GM12878 (cell line): ENCODE measurements at regions of chr10 and their contacts with region 1.

Region 1: GRCh38 chr10:110746254-110746826 is 102.2 kb downstream of the RBM20 start:
- DNase-seq: no peak
- ATAC-seq: peak; percentile 73
- H3K4me3 ChIP-seq: no peak overlapping the region
- H3K27ac ChIP-seq: peak overlapping the region; percentile 94; the same call in 1 of the 2 replicates
- H3K4me1 ChIP-seq: peaks cover 31% of the 10 kb centered on the region
- H3K27me3 ChIP-seq: no peaks in the 10 kb centered on the region
- CTCF ChIP-seq: peak; percentile 66 to 78 (median 76)
- EP300 ChIP-seq: no peak
- POLR2A ChIP-seq: no peak
- RAD21 ChIP-seq: peak; percentile 96

Region 2: DNA sequence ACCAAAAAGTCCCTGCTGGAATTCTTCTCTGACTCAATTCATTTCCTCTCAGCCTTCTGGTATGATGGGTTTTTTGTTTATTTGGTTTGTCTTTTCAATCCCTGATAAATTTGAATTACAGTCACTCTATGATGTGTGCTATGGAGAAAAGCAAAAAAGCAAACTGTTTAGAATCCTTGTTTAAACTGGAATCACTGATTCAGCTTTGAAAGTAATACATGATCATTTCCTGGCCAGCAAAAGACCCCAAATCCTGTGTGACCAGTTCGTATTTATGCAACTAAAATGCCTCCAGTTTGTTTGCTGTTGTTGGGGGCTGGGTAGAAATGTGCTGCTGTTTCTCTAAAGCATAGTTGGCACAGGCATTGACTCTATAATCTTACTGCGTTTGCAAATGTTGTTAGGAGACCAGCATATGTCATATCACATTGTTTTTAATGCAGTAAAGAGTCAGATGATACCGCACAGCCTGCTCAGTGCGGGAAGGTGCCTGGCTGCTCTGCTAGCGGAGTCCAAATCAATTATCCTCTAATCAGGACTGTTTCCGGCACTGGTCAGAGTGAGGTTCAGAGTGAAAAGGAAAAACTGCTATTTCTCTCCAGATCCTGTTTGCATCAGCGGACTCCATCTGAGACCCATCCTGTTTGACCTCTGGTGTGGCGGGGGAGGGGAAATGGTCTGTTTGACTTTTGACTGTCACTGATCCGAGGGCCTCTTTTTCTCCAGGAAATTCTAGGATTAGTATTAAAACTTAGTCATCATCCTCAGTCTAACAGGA is 779.2 kb before region 1 on chr10:
- CTCF ChIA-PET with region 1: no interaction called
- POLR2A ChIA-PET with region 1: no interaction called
- RAD21 ChIA-PET with region 1: no interaction called
- SMC1A ChIA-PET with region 1: no interaction called
- in situ Hi-C with region 1: no loop called
- intact Hi-C with region 1: no loop called
- DNase-seq: no peak
- ATAC-seq: no peak
- H3K4me3 ChIP-seq: no peak overlapping the region
- H3K27ac ChIP-seq: no peak overlapping the region
- H3K4me1 ChIP-seq: no peaks in the 10 kb centered on the region
- H3K27me3 ChIP-seq: no peaks in the 10 kb centered on the region; a peak in 2 of 4 replicates
- CTCF ChIP-seq: no peak
- EP300 ChIP-seq: no peak
- POLR2A ChIP-seq: no peak
- RAD21 ChIP-seq: no peak

Region 3: DNA sequence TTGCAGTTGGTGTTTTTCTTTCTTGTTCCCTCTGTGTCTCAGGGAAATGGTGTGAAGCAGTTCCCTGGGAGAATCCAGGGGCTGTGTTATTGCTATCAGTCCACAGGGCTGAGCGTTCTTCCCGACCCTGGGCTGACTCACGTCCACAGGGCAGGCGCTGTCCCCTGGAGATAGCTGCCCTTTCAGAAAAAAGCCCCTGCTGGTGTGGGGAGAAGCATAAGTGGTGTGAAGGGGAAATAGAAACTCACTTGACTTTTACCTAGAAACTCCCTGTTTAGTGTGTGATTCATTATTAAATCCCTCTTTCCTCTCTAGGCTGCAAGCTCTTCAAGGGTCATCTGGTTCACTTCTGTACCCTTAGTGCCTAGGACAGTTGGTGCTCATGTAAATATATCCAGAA is 378.3 kb before region 1 on chr10:
- CTCF ChIA-PET with region 1: no interaction called
- POLR2A ChIA-PET with region 1: no interaction called
- RAD21 ChIA-PET with region 1: no interaction called
- SMC1A ChIA-PET with region 1: no interaction called
- in situ Hi-C with region 1: no loop called
- intact Hi-C with region 1: no loop called
- DNase-seq: no peak
- ATAC-seq: peak; percentile 86
- H3K4me3 ChIP-seq: no peak overlapping the region
- H3K27ac ChIP-seq: no peak overlapping the region; the same call in 1 of the 2 replicates
- H3K4me1 ChIP-seq: peaks cover 29% of the 10 kb centered on the region
- H3K27me3 ChIP-seq: no peaks in the 10 kb centered on the region
- CTCF ChIP-seq: no peak
- EP300 ChIP-seq: peak in 1 of 2 experiments; percentile 43; a peak in 1 of 4 replicates
- POLR2A ChIP-seq: no peak
- RAD21 ChIP-seq: no peak

Region 4: DNA sequence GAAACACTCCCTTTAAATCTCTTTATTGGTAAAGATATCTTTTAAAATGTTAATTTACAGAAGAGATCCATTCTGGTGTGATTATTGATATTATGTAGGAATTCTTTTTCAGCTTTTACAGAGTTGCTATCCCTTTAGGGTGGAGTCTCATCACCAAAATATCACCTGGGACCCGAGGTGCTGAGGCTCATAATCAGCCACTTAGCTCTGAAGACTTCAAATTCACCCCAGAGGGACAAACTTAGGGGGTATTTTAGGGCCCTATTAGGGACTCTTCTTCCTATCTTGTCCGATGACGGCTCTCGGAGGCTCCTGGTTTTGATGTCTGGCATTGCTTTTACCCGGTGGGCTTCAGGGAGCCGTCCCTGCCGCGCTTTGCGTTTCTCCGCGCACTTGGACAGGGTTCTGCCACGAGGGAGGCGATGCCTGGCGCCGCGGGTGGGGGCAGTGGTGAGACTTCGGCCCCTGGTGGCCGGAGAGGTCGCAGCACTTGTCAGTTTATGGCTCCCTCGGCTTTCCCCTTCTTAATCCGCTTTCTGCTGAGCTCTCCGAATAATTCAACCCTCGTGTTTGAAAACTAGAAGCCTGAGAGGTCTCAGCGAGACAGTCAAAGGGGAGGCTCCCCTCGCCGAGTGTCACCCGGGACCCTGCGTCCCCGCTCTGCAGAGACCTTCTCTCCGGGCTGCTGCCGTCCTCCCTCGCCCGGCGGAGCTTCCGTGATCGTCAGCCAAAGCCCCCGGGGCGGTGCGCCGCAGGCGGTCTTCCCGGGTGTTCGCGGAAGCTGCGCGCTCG is 74.4 kb before region 1 on chr10:
- CTCF ChIA-PET with region 1: interaction called, 11 read pairs
- POLR2A ChIA-PET with region 1: no interaction called
- RAD21 ChIA-PET with region 1: no interaction called
- SMC1A ChIA-PET with region 1: interaction called, 11 read pairs
- in situ Hi-C with region 1: no loop called
- intact Hi-C with region 1: no loop called
- DNase-seq: peak; percentile 27
- ATAC-seq: peak; percentile 99
- H3K4me3 ChIP-seq: peak overlapping the region; percentile 74
- H3K27ac ChIP-seq: peak overlapping the region; percentile 62
- H3K4me1 ChIP-seq: no peaks in the 10 kb centered on the region
- H3K27me3 ChIP-seq: no peaks in the 10 kb centered on the region
- CTCF ChIP-seq: peak; percentile 99 to 100 (median 99)
- EP300 ChIP-seq: no peak
- POLR2A ChIP-seq: peak; percentile 80
- RAD21 ChIP-seq: peak; percentile 64

Region 5: GRCh38 chr10:110717781-110718589 is 28.4 kb before region 1 on chr10:
- CTCF ChIA-PET with region 1: no interaction called
- POLR2A ChIA-PET with region 1: no interaction called
- RAD21 ChIA-PET with region 1: no interaction called
- SMC1A ChIA-PET with region 1: no interaction called
- in situ Hi-C with region 1: no loop called
- intact Hi-C with region 1: no loop called
- DNase-seq: no peak
- ATAC-seq: peak; percentile 74
- H3K4me3 ChIP-seq: no peak overlapping the region
- H3K27ac ChIP-seq: no peak overlapping the region
- H3K4me1 ChIP-seq: 0 out of 2 replicates have a peak, but pooled peaks cover 4% of the 10 kb centered on the region
- H3K27me3 ChIP-seq: no peaks in the 10 kb centered on the region
- CTCF ChIP-seq: no peak
- EP300 ChIP-seq: no peak
- POLR2A ChIP-seq: no peak
- RAD21 ChIP-seq: no peak

Region 6: DNA sequence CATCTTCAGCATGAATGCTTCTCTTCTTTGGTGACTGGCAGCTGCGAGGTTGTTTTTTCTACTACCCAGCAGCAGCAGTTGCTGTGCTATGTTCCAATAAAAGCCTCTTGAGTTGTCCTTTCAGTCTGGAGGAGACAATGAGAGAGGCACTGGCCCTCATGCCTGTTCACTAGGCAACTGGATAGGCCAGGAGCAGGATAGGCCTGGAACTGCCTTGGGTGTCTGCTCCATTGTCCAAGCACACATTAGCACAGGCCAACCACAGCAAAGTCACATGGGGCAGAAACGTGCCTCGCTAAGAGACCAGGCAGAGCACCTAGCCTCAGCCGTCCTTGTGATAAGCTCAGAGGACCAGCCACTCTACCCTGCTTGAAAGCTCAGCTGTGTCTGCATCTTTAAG is 48.5 kb after region 1 on chr10:
- CTCF ChIA-PET with region 1: interaction called, 19 read pairs
- POLR2A ChIA-PET with region 1: no interaction called
- RAD21 ChIA-PET with region 1: interaction called, 10 read pairs
- SMC1A ChIA-PET with region 1: interaction called, 10 read pairs
- in situ Hi-C with region 1: no loop called
- intact Hi-C with region 1: no loop called
- DNase-seq: no peak
- ATAC-seq: no peak
- H3K4me3 ChIP-seq: no peak overlapping the region
- H3K27ac ChIP-seq: no peak overlapping the region
- H3K4me1 ChIP-seq: peaks cover 4% of the 10 kb centered on the region; the same call in 1 of the 2 replicates
- H3K27me3 ChIP-seq: no peaks in the 10 kb centered on the region
- CTCF ChIP-seq: no peak
- EP300 ChIP-seq: no peak
- POLR2A ChIP-seq: no peak
- RAD21 ChIP-seq: no peak

Region 7: GRCh38 chr10:110893559-110894179 is 147.3 kb after region 1 on chr10:
- CTCF ChIA-PET with region 1: interaction called, 17 read pairs
- POLR2A ChIA-PET with region 1: interaction called, 3 read pairs
- RAD21 ChIA-PET with region 1: interaction called, 17 read pairs
- SMC1A ChIA-PET with region 1: interaction called, 52 read pairs
- in situ Hi-C with region 1: no loop called
- intact Hi-C with region 1: loop called (anchors 1 kb)
- DNase-seq: no peak
- ATAC-seq: peak; percentile 93
- H3K4me3 ChIP-seq: no peak overlapping the region
- H3K27ac ChIP-seq: no peak overlapping the region
- H3K4me1 ChIP-seq: no peaks in the 10 kb centered on the region
- H3K27me3 ChIP-seq: no peaks in the 10 kb centered on the region
- CTCF ChIP-seq: peak; percentile 34 to 52 (median 44); a peak in 4 of 6 replicates
- EP300 ChIP-seq: no peak
- POLR2A ChIP-seq: no peak
- RAD21 ChIP-seq: peak; percentile 66

Region 8: GRCh38 chr10:111018021-111018420 is 271.7 kb after region 1 on chr10:
- CTCF ChIA-PET with region 1: no interaction called
- POLR2A ChIA-PET with region 1: no interaction called
- RAD21 ChIA-PET with region 1: no interaction called
- SMC1A ChIA-PET with region 1: interaction called, 3 read pairs
- in situ Hi-C with region 1: no loop called
- intact Hi-C with region 1: loop called (anchors 10 kb)
- DNase-seq: no peak
- ATAC-seq: no peak
- H3K4me3 ChIP-seq: no peak overlapping the region
- H3K27ac ChIP-seq: no peak overlapping the region
- H3K4me1 ChIP-seq: no peaks in the 10 kb centered on the region; the same call in 1 of the 2 replicates
- H3K27me3 ChIP-seq: no peaks in the 10 kb centered on the region
- CTCF ChIP-seq: no peak
- EP300 ChIP-seq: no peak
- POLR2A ChIP-seq: no peak
- RAD21 ChIP-seq: no peak

Region 9: GRCh38 chr10:111344804-111345203 is 598.5 kb after region 1 on chr10:
- CTCF ChIA-PET with region 1: no interaction called
- POLR2A ChIA-PET with region 1: no interaction called
- RAD21 ChIA-PET with region 1: no interaction called
- SMC1A ChIA-PET with region 1: no interaction called
- in situ Hi-C with region 1: loop called (anchors 25 kb)
- intact Hi-C with region 1: no loop called
- DNase-seq: no peak
- ATAC-seq: peak; percentile 46; the same call in 2 of the 3 replicates
- H3K4me3 ChIP-seq: no peak overlapping the region
- H3K27ac ChIP-seq: no peak overlapping the region
- H3K4me1 ChIP-seq: no peaks in the 10 kb centered on the region; the same call in 1 of the 2 replicates
- H3K27me3 ChIP-seq: no peaks in the 10 kb centered on the region; a peak in 1 of 4 replicates
- CTCF ChIP-seq: peak in 2 of 3 experiments; percentile 4 to 44; a peak in 2 of 6 replicates
- EP300 ChIP-seq: no peak
- POLR2A ChIP-seq: no peak
- RAD21 ChIP-seq: 0 out of 2 replicates have a peak, but pooled peaks have one; percentile 12